IMR-90 (cell line): ENCODE measurements at regions of chr17 and their contacts with region 1.

Region 1: GRCh38 chr17:31549525-31550388 is 158.3 kb downstream of the RAB11FIP4 start:
- DNase-seq: peak; percentile 92
- ATAC-seq: peak; percentile 92
- H3K4me3 ChIP-seq: peak overlapping the region; percentile 74
- H3K27ac ChIP-seq: peak overlapping the region; percentile 84
- H3K4me1 ChIP-seq: no peaks in the 10 kb centered on the region; the same call in 1 of the 2 replicates
- H3K27me3 ChIP-seq: no peaks in the 10 kb centered on the region
- CTCF ChIP-seq: no peak
- POLR2A ChIP-seq: no peak
- RAD21 ChIP-seq: peak; percentile 10

Region 2: DNA sequence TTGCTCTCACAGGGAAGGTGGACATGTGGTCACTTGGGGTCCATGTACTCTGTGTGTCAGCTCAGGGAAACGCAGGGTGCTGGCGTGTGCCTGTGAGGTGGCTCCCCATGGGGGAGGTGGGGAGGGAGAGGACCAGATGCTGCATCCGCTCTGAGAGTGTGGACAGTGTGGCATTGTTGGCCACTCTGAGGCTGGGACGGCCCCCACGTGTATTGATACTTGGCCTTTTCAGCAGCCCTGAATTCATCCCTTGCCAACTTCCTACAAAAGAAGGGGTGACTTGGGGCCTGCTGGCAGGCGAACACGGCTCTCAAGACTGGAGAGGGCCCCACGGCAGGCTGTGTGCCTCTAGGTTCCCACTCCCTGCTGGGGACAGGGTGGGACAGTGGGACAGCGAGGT is 38.2 kb before region 1 on chr17:
- CTCF ChIA-PET with region 1: no interaction called
- POLR2A ChIA-PET with region 1: no interaction called
- dilution Hi-C with region 1: no loop called
- in situ Hi-C with region 1: no loop called
- intact Hi-C with region 1: no loop called
- DNase-seq: no peak
- ATAC-seq: no peak
- H3K4me3 ChIP-seq: no peak overlapping the region
- H3K27ac ChIP-seq: no peak overlapping the region
- H3K4me1 ChIP-seq: peaks cover 4% of the 10 kb centered on the region; the same call in 1 of the 2 replicates
- H3K27me3 ChIP-seq: peaks cover 17% of the 10 kb centered on the region; the same call in 1 of the 2 replicates
- CTCF ChIP-seq: no peak
- POLR2A ChIP-seq: no peak
- RAD21 ChIP-seq: no peak

Region 3: DNA sequence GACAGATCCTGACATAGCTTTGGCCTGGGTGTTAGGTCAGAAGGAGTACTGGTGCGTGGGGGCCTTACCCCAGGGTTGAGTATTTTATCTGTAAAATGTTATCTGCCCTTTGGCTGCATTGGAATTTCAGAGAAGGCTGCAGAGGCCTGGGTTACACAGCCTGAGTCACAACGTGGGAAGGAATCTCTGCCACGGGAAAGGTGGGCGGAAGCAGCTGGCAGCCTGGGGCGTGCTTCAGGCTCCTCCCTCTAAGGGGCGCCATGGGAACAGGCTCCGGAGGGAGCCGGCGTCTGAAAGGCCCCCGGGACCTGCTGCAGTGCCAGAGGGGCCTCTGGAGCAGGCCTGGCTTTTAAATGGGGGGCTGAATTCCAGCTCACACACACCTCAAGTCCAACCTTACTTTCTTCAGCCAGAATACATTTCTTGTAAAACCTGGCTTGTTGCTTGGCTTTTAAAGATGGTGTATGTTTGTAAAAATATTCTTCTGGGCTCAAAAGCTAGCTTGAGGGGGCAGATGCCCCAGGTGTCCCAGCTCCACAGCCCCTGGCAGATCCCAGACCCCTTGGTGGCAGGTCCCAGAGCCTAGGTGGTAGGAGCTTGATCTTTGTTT is 16.1 kb before region 1 on chr17:
- CTCF ChIA-PET with region 1: no interaction called
- POLR2A ChIA-PET with region 1: interaction called, 10 read pairs
- dilution Hi-C with region 1: no loop called
- in situ Hi-C with region 1: no loop called
- intact Hi-C with region 1: no loop called
- DNase-seq: peak; percentile 88
- ATAC-seq: peak; percentile 93
- H3K4me3 ChIP-seq: no peak overlapping the region
- H3K27ac ChIP-seq: no peak overlapping the region; the same call in 1 of the 2 replicates
- H3K4me1 ChIP-seq: peaks cover 13% of the 10 kb centered on the region
- H3K27me3 ChIP-seq: no peaks in the 10 kb centered on the region
- CTCF ChIP-seq: peak; percentile 56
- POLR2A ChIP-seq: no peak
- RAD21 ChIP-seq: peak; percentile 62

Region 4: GRCh38 chr17:31696184-31696602 is 146.4 kb after region 1 on chr17:
- CTCF ChIA-PET with region 1: no interaction called
- POLR2A ChIA-PET with region 1: no interaction called
- dilution Hi-C with region 1: no loop called
- in situ Hi-C with region 1: no loop called
- intact Hi-C with region 1: loop called (anchors 5 kb)
- DNase-seq: peak; percentile 88
- ATAC-seq: peak; percentile 92
- H3K4me3 ChIP-seq: no peak overlapping the region
- H3K27ac ChIP-seq: peak overlapping the region; percentile 62
- H3K4me1 ChIP-seq: peaks cover 18% of the 10 kb centered on the region
- H3K27me3 ChIP-seq: no peaks in the 10 kb centered on the region
- CTCF ChIP-seq: no peak; the same call in 1 of the 2 replicates
- POLR2A ChIP-seq: no peak
- RAD21 ChIP-seq: peak; percentile 36